H1 (cell line): ENCODE measurements at regions of chr7 and their contacts with region 1.

Region 1: GRCh38 chr7:2451171-2452073 is 24.8 kb downstream of the GRIFIN start:
- DNase-seq: peak; percentile 59 to 96
- H3K4me3 ChIP-seq: no peak overlapping the region
- H3K27ac ChIP-seq: no peak overlapping the region
- H3K4me1 ChIP-seq: peaks cover 0 to 8% (median 6%) of the 10 kb centered on the region in 4 experiments; a peak in 5 of 7 replicates
- H3K27me3 ChIP-seq: no peaks in the 10 kb centered on the region
- CTCF ChIP-seq: peak; percentile 93 to 96 (median 96)
- EP300 ChIP-seq: no peak
- POLR2A ChIP-seq: no peak; a peak in 1 of 3 replicates
- RAD21 ChIP-seq: peak; percentile 93 to 97

Region 2: DNA sequence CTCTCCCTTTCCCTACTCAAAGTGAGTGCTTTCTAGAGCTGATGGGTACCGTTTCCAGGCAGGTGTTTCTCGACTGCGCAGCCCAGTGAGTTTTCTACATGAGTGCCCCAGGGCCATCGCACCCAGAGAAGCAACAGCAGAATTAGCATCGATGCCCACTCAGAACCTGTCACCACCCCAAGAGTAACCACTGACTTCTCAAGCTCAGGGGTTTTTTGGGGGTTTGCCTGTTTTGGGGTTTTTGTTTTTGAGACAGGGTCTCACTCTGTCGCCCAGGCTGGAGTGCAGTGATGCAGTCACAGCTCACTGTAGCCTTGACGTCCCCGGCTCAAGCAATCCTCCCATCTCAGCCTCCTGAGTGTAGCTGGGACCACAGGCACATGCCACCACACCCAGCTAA is 162.9 kb before region 1 on chr7:
- CTCF ChIA-PET with region 1: no interaction called
- POLR2A ChIA-PET with region 1: no interaction called
- DNase-seq: no peak
- H3K4me3 ChIP-seq: no peak overlapping the region
- H3K27ac ChIP-seq: no peak overlapping the region
- H3K4me1 ChIP-seq: no peaks in the 10 kb centered on the region; a peak in 3 of 7 replicates
- H3K27me3 ChIP-seq: no peaks in the 10 kb centered on the region; a peak in 1 of 7 replicates
- CTCF ChIP-seq: no peak
- EP300 ChIP-seq: no peak
- POLR2A ChIP-seq: no peak
- RAD21 ChIP-seq: no peak

Region 3: DNA sequence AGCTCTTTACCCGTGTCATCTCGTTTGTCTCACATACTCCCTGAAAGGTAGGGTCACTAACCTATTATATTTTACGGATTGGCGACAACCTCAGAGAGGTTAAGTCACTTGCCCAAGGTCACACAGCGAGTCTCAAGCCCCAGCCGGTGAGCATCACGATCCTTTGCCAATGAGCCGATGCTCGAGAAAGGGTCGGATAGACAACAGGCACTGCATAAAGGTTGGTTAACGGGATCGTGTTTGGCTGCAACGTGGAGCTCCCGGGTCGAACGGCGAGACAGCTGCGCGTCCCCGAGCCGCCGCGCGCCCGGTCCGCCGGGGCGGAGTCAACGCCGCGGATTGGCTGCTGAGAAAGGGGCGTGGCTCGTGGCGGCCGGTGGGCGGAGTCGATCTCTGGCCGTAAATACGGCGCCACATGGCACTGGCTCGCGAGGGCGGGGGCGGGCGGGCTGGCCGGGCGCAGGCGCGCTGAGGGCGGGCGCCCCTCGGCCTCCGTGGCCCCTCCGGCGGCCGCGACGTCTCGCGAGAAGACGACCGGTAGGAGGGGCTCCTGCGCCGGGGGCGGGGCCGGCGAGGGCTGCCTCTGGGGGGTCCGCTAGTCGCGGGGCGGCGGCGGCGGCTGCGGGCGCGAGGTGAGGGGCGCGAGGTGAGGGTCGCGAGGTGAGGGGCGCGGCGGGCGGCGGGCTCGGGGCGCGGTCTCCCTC is 48.3 kb before region 1 on chr7 and contains the start of gene CHST12:
- CTCF ChIA-PET with region 1: interaction called, 12 read pairs
- POLR2A ChIA-PET with region 1: no interaction called
- DNase-seq: peak; percentile 83 to 97
- H3K4me3 ChIP-seq: peak within 1 kb of the TSS; percentile 72 to 95 (median 82)
- H3K27ac ChIP-seq: no peak within 1 kb of the TSS
- H3K4me1 ChIP-seq: peaks cover 2 to 8% (median 4%) of the 10 kb centered on the region in 4 experiments
- H3K27me3 ChIP-seq: no peaks in the 10 kb centered on the region
- CTCF ChIP-seq: no peak
- EP300 ChIP-seq: no peak
- POLR2A ChIP-seq: peak in 1 of 2 experiments; percentile 55; a peak in 2 of 3 replicates
- RAD21 ChIP-seq: no peak
- total RNA-seq, gene CHST12: 13.4 and 18.2 TPM in 2 replicates

Region 4: DNA sequence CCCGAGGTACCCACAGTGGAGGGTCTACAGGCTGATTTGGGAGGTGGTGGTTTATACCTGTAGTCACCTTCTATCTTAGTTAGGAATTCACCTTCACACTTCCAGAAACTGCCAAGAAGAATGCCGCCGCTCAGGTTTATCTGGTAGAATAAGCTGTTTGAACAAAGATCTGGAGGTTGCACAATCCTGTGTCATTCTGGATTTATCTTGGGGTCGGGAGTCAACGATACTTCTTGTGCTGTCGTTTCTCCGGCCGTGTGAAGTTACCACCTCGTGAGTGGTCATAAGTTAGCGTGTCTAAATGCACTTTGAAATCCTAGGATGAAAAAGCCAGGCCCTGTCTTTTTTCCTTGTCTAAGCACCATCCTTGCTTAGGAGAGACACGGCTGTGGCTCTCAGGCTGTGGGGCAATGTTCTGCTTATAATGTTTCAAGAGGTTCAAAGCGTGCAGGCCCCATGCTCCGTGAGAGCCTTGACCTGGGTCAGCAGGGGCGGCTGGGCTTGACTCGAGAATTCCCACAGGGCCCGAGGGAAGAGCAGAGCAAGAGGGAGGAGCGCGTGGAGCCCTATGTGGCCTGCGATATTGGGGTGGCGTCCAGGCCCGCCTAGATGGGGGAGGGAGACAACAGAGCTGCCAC is 10.7 kb before region 1 on chr7:
- CTCF ChIA-PET with region 1: interaction called, 119 read pairs
- POLR2A ChIA-PET with region 1: interaction called, 16 read pairs
- DNase-seq: no peak
- H3K4me3 ChIP-seq: no peak overlapping the region
- H3K27ac ChIP-seq: no peak overlapping the region
- H3K4me1 ChIP-seq: no peaks in the 10 kb centered on the region
- H3K27me3 ChIP-seq: no peaks in the 10 kb centered on the region
- CTCF ChIP-seq: no peak
- EP300 ChIP-seq: no peak
- POLR2A ChIP-seq: no peak
- RAD21 ChIP-seq: no peak

Region 5: GRCh38 chr7:2477447-2478398 is 26.3 kb after region 1 on chr7:
- CTCF ChIA-PET with region 1: interaction called, 266 read pairs
- POLR2A ChIA-PET with region 1: no interaction called
- DNase-seq: peak; percentile 36 to 82
- H3K4me3 ChIP-seq: no peak overlapping the region
- H3K27ac ChIP-seq: no peak overlapping the region
- H3K4me1 ChIP-seq: peaks cover 0 to 34% (median 20%) of the 10 kb centered on the region in 4 experiments; a peak in 6 of 7 replicates
- H3K27me3 ChIP-seq: no peaks in the 10 kb centered on the region; a peak in 2 of 7 replicates
- CTCF ChIP-seq: peak in 2 of 3 experiments; percentile 76 to 87; a peak in 3 of 4 replicates
- EP300 ChIP-seq: no peak
- POLR2A ChIP-seq: no peak
- RAD21 ChIP-seq: peak; percentile 85 to 86

Region 6: GRCh38 chr7:2551418-2551817 is 100.0 kb after region 1 on chr7:
- CTCF ChIA-PET with region 1: interaction called, 11 read pairs
- POLR2A ChIA-PET with region 1: no interaction called
- DNase-seq: no peak
- H3K4me3 ChIP-seq: no peak overlapping the region
- H3K27ac ChIP-seq: no peak overlapping the region
- H3K4me1 ChIP-seq: peaks cover 4 to 11% (median 6%) of the 10 kb centered on the region in 4 experiments
- H3K27me3 ChIP-seq: no peaks in the 10 kb centered on the region
- CTCF ChIP-seq: no peak
- EP300 ChIP-seq: no peak
- POLR2A ChIP-seq: no peak
- RAD21 ChIP-seq: no peak

Region 7: DNA sequence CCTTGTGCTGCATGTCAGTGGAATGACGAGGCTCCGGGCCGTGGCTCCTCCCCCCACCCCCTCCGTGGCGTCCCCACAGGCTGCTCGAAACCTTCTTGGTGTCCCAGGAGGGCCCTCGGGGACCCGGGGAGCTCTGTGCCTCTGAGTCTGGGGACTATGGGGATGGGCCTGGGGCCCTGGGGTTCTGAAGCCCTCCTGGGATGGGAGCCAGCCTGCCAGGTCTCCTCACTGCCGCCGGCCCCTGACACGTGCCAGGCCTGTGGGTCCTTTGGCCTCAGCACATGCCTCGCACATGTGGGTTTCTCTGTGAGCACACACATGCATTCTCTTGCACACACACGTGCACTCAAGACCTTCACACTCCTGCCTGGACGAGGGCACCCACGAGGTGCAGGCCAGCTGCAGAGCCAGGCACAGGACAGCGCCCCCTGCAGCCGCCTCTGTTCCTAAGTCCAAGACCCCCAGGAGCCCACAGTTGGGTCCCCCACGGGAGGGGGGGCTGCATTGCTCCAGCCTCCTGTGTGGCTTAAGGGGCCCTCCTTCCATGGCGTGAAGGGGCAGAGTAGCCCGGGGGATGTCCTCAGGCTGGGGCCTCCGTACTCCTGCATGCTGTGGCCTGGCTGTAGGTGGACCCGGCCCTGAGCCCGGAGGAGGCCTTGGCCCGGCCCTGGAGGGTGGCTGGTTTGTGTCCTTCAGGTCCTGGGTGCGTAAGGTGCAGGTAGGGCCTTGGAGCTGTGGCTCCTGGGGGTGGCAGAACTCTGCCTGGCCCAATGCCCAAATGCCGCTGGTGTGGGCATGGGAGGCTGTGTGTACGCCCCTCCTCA is 209.4 kb after region 1 on chr7:
- CTCF ChIA-PET with region 1: interaction called, 15 read pairs
- POLR2A ChIA-PET with region 1: interaction called, 3 read pairs
- DNase-seq: peak in 1 of 2 experiments; percentile 71
- H3K4me3 ChIP-seq: no peak overlapping the region
- H3K27ac ChIP-seq: no peak overlapping the region
- H3K4me1 ChIP-seq: peaks cover 0 to 4% (median under 1%) of the 10 kb centered on the region in 4 experiments; a peak in 2 of 7 replicates
- H3K27me3 ChIP-seq: no peaks in the 10 kb centered on the region; a peak in 2 of 7 replicates
- CTCF ChIP-seq: peak in 2 of 3 experiments; percentile 50 to 60; a peak in 3 of 4 replicates
- EP300 ChIP-seq: no peak
- POLR2A ChIP-seq: no peak
- RAD21 ChIP-seq: peak; percentile 34 to 48; a peak in 3 of 4 replicates